ENCODE measurements at regions of chr6 and their contacts with region 1.

Region 1: DNA sequence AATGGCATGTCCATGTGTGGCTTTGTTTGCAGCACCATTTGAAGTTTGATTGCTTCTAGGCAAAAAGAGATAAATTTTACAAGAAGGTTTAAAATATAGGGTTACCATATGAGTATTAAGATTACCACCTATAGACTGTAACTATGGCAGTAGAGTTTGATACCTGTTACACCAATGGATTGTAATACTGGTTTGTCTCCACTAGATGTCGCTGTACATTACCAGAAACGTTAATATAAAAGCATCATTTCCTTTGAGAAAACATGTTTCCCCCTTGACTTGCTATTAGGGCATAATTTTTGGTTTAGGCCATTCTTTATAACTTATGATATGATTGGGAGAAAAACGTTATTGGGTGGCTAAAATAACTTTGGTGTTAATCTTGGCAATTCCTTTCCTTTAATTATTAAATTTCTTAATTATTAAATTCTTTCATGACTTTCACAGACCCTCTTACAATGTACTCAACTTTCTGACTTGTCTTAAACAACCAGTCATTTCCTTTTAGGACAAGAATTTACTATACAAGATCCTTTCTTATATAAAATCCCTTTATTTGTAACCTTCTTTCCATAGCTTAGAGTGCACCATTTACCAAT is 42.8 kb downstream of the HLA-DPB1 start:
- DNase-seq: peak in 1 of 2 experiments; percentile 59
- H3K4me3 ChIP-seq: peak overlapping the region; percentile 82 to 96 (median 92)
- H3K27ac ChIP-seq: peak overlapping the region; percentile 98
- H3K4me1 ChIP-seq: peaks cover 2 to 21% (median 9%) of the 10 kb centered on the region in 4 experiments; a peak in 6 of 7 replicates
- H3K27me3 ChIP-seq: no peaks in the 10 kb centered on the region
- CTCF ChIP-seq: peak in 2 of 3 experiments; percentile 26 to 69; a peak in 2 of 4 replicates
- EP300 ChIP-seq: no peak
- POLR2A ChIP-seq: 0 out of 3 replicates have a peak, but pooled peaks of 1 of the 2 experiments have one; percentile 17
- RAD21 ChIP-seq: peak; percentile 44

Region 2: GRCh38 chr6:32885698-32886286 is 232.8 kb before region 1 on chr6:
- CTCF ChIA-PET with region 1: no interaction called
- POLR2A ChIA-PET with region 1: no interaction called
- DNase-seq: no peak
- H3K4me3 ChIP-seq: no peak overlapping the region
- H3K27ac ChIP-seq: no peak overlapping the region
- H3K4me1 ChIP-seq: no peaks in the 10 kb centered on the region
- H3K27me3 ChIP-seq: no peaks in the 10 kb centered on the region
- CTCF ChIP-seq: peak in 2 of 3 experiments; percentile 25 to 38; a peak in 2 of 4 replicates
- EP300 ChIP-seq: no peak
- POLR2A ChIP-seq: no peak
- RAD21 ChIP-seq: peak; percentile 63 to 67

Region 3: DNA sequence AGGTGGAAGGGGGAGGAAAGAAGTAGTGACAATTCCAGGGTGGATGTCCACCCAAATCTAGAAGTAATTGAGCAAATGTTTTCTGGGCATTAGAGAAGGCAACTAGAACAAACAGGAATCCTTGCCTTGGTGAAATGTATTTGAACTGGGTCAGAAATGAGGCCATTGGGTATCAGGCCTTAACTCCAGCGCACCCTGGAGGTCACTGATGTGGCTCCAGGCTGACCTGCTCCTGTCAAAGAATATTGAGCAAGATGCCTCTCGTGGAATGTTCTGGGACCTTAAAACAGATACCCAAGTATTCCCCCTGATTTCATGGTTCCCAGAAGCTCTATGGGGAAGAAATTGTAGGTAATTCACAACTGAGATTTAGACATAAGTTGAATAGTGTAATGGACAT is 35.9 kb before region 1 on chr6:
- CTCF ChIA-PET with region 1: interaction called, 13 read pairs
- POLR2A ChIA-PET with region 1: interaction called, 23 read pairs
- DNase-seq: peak in 1 of 2 experiments; percentile 65
- H3K4me3 ChIP-seq: no peak overlapping the region
- H3K27ac ChIP-seq: no peak overlapping the region
- H3K4me1 ChIP-seq: peaks cover 2 to 8% (median 5%) of the 10 kb centered on the region in 4 experiments; a peak in 6 of 7 replicates
- H3K27me3 ChIP-seq: peaks cover 0 to 8% (median 3%) of the 10 kb centered on the region in 4 experiments; a peak in 4 of 7 replicates
- CTCF ChIP-seq: peak; percentile 81 to 86 (median 84)
- EP300 ChIP-seq: no peak
- POLR2A ChIP-seq: no peak
- RAD21 ChIP-seq: peak; percentile 74 to 82

Region 4: GRCh38 chr6:33105916-33106871 is 12.4 kb before region 1 on chr6:
- CTCF ChIA-PET with region 1: interaction called, 5 read pairs
- POLR2A ChIA-PET with region 1: interaction called, 25 read pairs
- DNase-seq: no peak
- H3K4me3 ChIP-seq: no peak overlapping the region
- H3K27ac ChIP-seq: no peak overlapping the region
- H3K4me1 ChIP-seq: no peaks in the 10 kb centered on the region
- H3K27me3 ChIP-seq: no peaks in the 10 kb centered on the region; a peak in 1 of 7 replicates
- CTCF ChIP-seq: no peak
- EP300 ChIP-seq: no peak
- POLR2A ChIP-seq: no peak
- RAD21 ChIP-seq: no peak

Region 5: GRCh38 chr6:33139596-33140206 is 21.1 kb after region 1 on chr6:
- CTCF ChIA-PET with region 1: interaction called, 63 read pairs
- POLR2A ChIA-PET with region 1: interaction called, 23 read pairs
- DNase-seq: no peak
- H3K4me3 ChIP-seq: no peak overlapping the region
- H3K27ac ChIP-seq: no peak overlapping the region
- H3K4me1 ChIP-seq: no peaks in the 10 kb centered on the region
- H3K27me3 ChIP-seq: no peaks in the 10 kb centered on the region
- CTCF ChIP-seq: no peak
- EP300 ChIP-seq: no peak
- POLR2A ChIP-seq: no peak
- RAD21 ChIP-seq: no peak

Region 6: GRCh38 chr6:33156561-33156960 is 37.9 kb after region 1 on chr6:
- CTCF ChIA-PET with region 1: interaction called, 18 read pairs
- POLR2A ChIA-PET with region 1: no interaction called
- DNase-seq: no peak
- H3K4me3 ChIP-seq: no peak overlapping the region
- H3K27ac ChIP-seq: no peak overlapping the region
- H3K4me1 ChIP-seq: peaks cover 0 to 3% (median 0%) of the 10 kb centered on the region in 4 experiments; a peak in 2 of 7 replicates
- H3K27me3 ChIP-seq: no peaks in the 10 kb centered on the region
- CTCF ChIP-seq: no peak
- EP300 ChIP-seq: no peak
- POLR2A ChIP-seq: no peak
- RAD21 ChIP-seq: no peak

Region 7: DNA sequence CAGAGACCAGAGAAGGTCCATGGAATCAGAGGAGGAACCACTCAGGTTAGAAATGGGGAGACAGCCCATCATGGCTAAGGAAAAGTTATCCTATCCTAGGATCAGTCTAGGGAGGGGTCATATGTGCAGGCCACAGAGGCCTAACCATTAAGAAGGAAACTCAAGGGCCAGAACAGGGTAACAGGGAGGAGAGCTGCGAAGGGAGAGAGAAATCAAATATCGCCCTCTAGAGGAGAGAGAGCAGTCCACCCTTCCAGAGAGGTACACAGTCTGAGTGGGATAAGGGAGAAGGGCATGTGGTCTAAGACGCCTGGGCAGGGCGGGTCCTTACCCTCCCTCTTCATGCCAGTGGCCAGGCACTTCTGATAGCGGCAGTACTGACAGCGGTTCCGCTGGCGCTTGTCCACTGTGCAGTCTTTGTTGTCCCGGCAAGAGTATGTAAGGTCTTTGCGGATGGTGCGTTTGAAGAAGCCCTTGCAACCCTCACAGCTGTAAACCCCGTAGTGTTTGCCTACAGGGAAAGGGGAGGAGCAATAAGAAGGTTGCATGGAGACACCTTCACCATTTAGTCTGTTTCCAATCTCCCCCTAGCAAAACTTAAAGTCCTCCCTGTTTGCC is 78.9 kb after region 1 on chr6:
- CTCF ChIA-PET with region 1: interaction called, 17 read pairs
- POLR2A ChIA-PET with region 1: interaction called, 4 read pairs
- DNase-seq: peak in 1 of 2 experiments; percentile 70
- H3K4me3 ChIP-seq: no peak overlapping the region
- H3K27ac ChIP-seq: no peak overlapping the region
- H3K4me1 ChIP-seq: peaks cover 5 to 18% (median 9%) of the 10 kb centered on the region in 4 experiments
- H3K27me3 ChIP-seq: peaks cover 0 to 4% (median 0%) of the 10 kb centered on the region in 4 experiments; a peak in 3 of 7 replicates
- CTCF ChIP-seq: peak in 2 of 3 experiments; percentile 77 to 91; a peak in 3 of 4 replicates
- EP300 ChIP-seq: no peak
- POLR2A ChIP-seq: no peak
- RAD21 ChIP-seq: peak; percentile 67 to 73

Region 8: GRCh38 chr6:33384581-33385020 is 266.0 kb after region 1 on chr6:
- CTCF ChIA-PET with region 1: no interaction called
- POLR2A ChIA-PET with region 1: no interaction called
- DNase-seq: no peak
- H3K4me3 ChIP-seq: no peak overlapping the region
- H3K27ac ChIP-seq: no peak overlapping the region
- H3K4me1 ChIP-seq: no peaks in the 10 kb centered on the region
- H3K27me3 ChIP-seq: no peaks in the 10 kb centered on the region
- CTCF ChIP-seq: peak; percentile 4 to 50 (median 47)
- EP300 ChIP-seq: no peak
- POLR2A ChIP-seq: no peak
- RAD21 ChIP-seq: peak; percentile 34 to 46; a peak in 3 of 4 replicates